MCF 10A (cell line): ENCODE measurements at regions of chr9 and their contacts with region 1.

Region 1: DNA sequence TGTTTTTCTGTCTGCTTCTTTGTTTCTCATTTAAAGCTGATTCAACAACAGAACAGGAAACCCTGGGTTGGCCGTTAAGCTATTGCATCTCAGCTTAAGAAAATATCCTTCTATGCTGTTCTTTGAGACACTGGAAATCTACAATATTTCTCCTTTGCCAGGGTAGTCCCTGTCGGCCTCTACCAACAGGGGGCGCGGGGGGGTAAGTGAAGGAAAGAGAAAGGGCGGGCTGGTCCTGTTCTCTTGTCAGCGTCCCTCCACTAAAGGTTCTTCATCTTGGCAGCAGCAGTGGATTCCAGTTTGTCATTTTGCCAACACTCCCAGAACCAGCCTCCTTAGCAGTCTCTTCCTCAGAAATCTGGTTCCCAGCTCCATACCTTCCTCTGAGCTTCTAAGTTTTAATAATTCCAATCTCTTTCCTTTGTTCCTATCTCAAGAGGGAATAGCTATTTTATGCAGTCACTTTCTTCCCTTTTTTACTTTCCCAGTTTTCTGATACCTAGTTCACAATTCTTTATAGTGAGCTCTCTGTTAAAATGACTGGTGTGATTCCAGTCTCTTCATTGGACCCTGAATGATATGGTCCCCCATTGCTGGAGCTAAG is 222.3 kb downstream of the GLIS3 start:
- DNase-seq: peak; percentile 86
- H3K4me3 Mint-ChIP-seq: no peak overlapping the region
- H3K27ac Mint-ChIP-seq: no peak overlapping the region
- H3K4me1 Mint-ChIP-seq: peaks cover 7% of the 10 kb centered on the region
- H3K27me3 Mint-ChIP-seq: no peaks in the 10 kb centered on the region
- CTCF ChIP-seq: peak; percentile 79

Region 2: GRCh38 chr9:4022435-4023067 is 55.0 kb before region 1 on chr9:
- CTCF ChIA-PET with region 1: no interaction called
- POLR2A ChIA-PET with region 1: no interaction called
- intact Hi-C with region 1: no loop called
- DNase-seq: no peak
- H3K4me3 Mint-ChIP-seq: no peak overlapping the region
- H3K27ac Mint-ChIP-seq: no peak overlapping the region
- H3K4me1 Mint-ChIP-seq: no peaks in the 10 kb centered on the region
- H3K27me3 Mint-ChIP-seq: no peaks in the 10 kb centered on the region
- CTCF ChIP-seq: no peak

Region 3: DNA sequence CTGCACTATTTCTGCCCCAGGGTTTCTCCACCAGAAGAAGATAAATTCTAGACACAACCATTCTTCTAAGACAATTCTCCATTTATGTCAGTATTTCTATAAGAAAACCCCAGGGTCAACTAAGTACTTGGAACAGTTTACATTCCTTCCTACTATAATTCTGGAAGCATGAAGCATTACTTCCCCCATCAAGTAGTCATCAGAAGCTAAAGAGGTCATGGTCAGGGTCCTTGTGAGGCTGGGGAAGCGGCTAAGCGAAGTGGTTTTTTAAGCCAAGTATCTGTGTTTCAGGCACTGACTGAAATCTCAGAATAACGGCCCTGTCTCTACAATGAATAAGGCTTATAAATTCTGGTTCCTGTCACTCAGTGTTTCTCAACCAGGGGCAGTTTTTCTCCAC is 24.5 kb after region 1 on chr9:
- CTCF ChIA-PET with region 1: interaction called, 10 read pairs
- POLR2A ChIA-PET with region 1: no interaction called
- intact Hi-C with region 1: no loop called
- DNase-seq: no peak
- H3K4me3 Mint-ChIP-seq: no peak overlapping the region
- H3K27ac Mint-ChIP-seq: no peak overlapping the region
- H3K4me1 Mint-ChIP-seq: peaks cover 17% of the 10 kb centered on the region
- H3K27me3 Mint-ChIP-seq: no peaks in the 10 kb centered on the region
- CTCF ChIP-seq: no peak

Region 4: DNA sequence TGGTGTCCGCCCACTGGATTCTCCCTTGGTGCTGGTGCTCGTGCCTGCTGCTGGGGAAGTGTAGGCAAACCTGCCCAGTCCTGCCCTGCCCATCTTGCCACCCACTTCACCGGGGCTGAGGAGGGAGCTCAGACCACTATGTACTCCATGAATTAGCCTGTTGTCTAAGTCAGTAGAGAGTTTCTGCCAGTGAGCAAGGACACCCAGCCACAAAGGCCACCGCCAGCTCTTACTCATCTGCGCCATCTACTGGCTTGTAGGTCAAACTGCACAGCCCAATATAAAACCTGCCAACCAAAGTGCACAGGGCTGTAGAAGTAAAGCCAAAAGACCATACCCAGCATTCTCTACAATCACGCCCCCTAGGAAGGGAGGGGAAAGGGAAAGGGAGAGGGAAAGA is 119.9 kb after region 1 on chr9:
- CTCF ChIA-PET with region 1: interaction called, 3 read pairs
- POLR2A ChIA-PET with region 1: no interaction called
- intact Hi-C with region 1: loop called (anchors 1 kb)
- DNase-seq: peak; percentile 48
- H3K4me3 Mint-ChIP-seq: no peak overlapping the region
- H3K27ac Mint-ChIP-seq: no peak overlapping the region
- H3K4me1 Mint-ChIP-seq: no peaks in the 10 kb centered on the region
- H3K27me3 Mint-ChIP-seq: no peaks in the 10 kb centered on the region
- CTCF ChIP-seq: peak; percentile 62

Region 5: DNA sequence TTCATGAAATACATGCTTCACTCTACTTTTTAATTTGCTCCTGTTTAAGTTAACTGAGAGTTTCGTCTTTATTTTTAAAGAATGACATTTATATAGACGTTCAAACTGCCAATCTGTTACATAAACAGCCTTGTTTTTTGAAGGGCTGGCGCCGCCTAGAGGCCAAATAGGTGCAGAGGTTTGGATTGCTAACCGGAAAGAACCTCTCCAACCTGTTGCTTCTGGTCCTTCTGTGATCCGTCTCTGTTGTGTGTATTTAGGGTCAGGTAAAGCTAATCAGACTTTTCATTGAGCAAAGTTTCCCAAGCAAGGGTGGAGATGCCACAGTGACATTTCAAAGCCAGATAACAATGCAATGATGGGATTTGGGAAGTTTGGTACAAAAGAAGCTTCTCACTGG is 261.8 kb after region 1 on chr9:
- CTCF ChIA-PET with region 1: interaction called, 11 read pairs
- POLR2A ChIA-PET with region 1: no interaction called
- intact Hi-C with region 1: loop called (anchors 1 kb)
- DNase-seq: peak; percentile 90
- H3K4me3 Mint-ChIP-seq: no peak overlapping the region
- H3K27ac Mint-ChIP-seq: no peak overlapping the region
- H3K4me1 Mint-ChIP-seq: peaks cover 10% of the 10 kb centered on the region
- H3K27me3 Mint-ChIP-seq: no peaks in the 10 kb centered on the region
- CTCF ChIP-seq: peak; percentile 92